AG04450 (cell line): ENCODE measurements at regions of chr18 and their contacts with region 1.

Region 1: DNA sequence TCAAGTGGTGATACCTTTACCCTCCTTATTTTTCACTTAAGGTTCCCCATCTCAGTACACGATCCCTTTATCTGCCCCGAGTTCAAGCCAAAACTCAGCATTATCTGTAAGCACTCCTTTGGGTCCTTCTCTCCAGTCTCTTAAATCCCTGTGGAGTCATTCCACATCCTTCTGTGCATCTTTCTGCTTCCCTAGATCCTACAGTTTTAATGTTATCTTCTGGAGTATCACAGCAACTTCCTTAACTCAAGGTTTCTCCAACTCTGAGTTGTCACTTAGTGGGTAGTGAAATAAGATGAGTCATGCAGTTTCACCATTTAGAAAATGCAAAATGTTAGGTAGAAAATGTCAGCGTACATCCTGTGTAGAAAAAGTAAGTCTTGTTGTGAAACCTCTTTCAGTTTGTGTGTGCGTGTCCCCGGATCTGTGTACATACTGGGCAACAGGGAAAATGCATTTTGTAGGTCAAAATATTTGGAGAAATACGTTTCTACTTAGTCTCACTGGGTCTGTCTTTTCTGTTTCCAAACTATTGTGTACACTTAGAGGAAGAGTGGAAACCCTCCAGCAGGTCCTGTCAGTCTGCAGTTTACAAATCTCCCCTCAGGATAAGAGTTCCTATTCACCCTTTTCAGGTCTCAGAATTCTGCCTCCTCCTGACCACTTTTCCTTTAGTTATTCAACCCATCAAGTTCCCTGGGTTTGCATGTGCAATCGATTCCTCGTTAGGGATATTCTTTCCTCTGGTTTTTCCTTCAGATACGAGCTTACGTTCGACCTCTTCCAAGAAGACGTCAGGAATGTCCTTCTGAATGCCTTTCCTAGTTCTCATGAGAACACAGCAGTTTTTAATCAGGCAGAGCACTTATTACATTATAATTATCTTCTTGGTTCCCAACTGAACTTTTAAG is 154.8 kb downstream of the TGIF1 start:
- DNase-seq: peak; percentile 90
- H3K4me3 ChIP-seq: peak overlapping the region; percentile 57
- H3K27ac ChIP-seq: peak overlapping the region; percentile 100
- H3K27me3 ChIP-seq: no peaks in the 10 kb centered on the region
- CTCF ChIP-seq: no peak

Region 2: GRCh38 chr18:3044894-3045698 is 559.7 kb before region 1 on chr18:
- CTCF ChIA-PET with region 1: no interaction called
- POLR2A ChIA-PET with region 1: no interaction called
- DNase-seq: no peak
- H3K4me3 ChIP-seq: no peak overlapping the region
- H3K27ac ChIP-seq: no peak overlapping the region
- H3K27me3 ChIP-seq: no peaks in the 10 kb centered on the region
- CTCF ChIP-seq: no peak

Region 3: GRCh38 chr18:3333056-3333720 is 271.6 kb before region 1 on chr18:
- CTCF ChIA-PET with region 1: no interaction called
- POLR2A ChIA-PET with region 1: interaction called, 12 read pairs
- DNase-seq: no peak
- H3K4me3 ChIP-seq: no peak overlapping the region
- H3K27ac ChIP-seq: no peak overlapping the region
- H3K27me3 ChIP-seq: no peaks in the 10 kb centered on the region
- CTCF ChIP-seq: no peak

Region 4: GRCh38 chr18:3447895-3448837 is 156.6 kb before region 1 on chr18:
- CTCF ChIA-PET with region 1: interaction called, 11 read pairs
- POLR2A ChIA-PET with region 1: interaction called, 29 read pairs
- DNase-seq: peak; percentile 88
- H3K4me3 ChIP-seq: peak overlapping the region; percentile 89
- H3K27ac ChIP-seq: peak overlapping the region; percentile 99
- H3K27me3 ChIP-seq: no peaks in the 10 kb centered on the region
- CTCF ChIP-seq: peak; percentile 18; the same call in 1 of the 2 replicates

Region 5: DNA sequence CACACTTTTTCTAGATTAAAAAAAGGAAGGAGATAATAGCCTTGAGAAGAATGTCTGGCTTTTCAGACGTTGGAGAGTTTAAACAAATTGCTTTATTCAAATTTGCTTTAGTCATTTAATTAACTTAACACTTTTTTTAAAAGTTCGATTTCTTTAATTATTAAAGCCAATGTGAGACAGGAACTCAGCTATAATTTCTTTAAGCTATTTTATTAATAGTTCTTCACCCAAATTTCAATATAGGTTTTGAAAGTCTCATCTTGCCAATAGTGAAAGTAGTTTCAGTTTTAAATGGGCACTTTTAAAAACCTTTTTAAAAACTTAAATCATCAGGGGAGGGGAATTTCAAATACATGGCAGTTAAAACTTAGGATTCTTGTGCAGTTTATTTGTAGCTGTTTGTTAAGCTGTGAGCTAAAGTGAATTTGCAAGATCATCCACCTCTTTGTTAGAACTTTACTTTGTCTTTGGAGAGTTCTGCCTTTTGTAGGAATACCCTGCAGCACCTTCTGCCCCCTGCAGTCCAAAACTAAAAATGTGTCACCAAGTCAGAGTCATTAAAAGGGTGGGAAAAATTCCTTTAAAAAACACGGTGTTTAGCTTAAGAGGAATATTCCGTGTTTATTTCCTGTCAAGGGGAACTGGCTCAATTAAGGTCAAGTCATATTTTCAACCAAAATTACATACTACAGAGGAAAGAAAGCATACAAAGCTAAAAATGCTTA is 150.2 kb before region 1 on chr18:
- CTCF ChIA-PET with region 1: interaction called, 11 read pairs
- POLR2A ChIA-PET with region 1: interaction called, 29 read pairs
- DNase-seq: no peak
- H3K4me3 ChIP-seq: peak overlapping the region; percentile 53
- H3K27ac ChIP-seq: peak overlapping the region; percentile 68
- H3K27me3 ChIP-seq: no peaks in the 10 kb centered on the region
- CTCF ChIP-seq: peak; percentile 74

Region 6: GRCh38 chr18:3593904-3594661 is 10.7 kb before region 1 on chr18:
- CTCF ChIA-PET with region 1: interaction called, 25 read pairs
- POLR2A ChIA-PET with region 1: interaction called, 15 read pairs
- DNase-seq: peak; percentile 96
- H3K4me3 ChIP-seq: peak overlapping the region; percentile 76
- H3K27ac ChIP-seq: peak overlapping the region; percentile 100
- H3K27me3 ChIP-seq: no peaks in the 10 kb centered on the region
- CTCF ChIP-seq: peak; percentile 89

Region 7: GRCh38 chr18:3623769-3624545 is 19.2 kb after region 1 on chr18:
- CTCF ChIA-PET with region 1: interaction called, 5 read pairs
- POLR2A ChIA-PET with region 1: interaction called, 28 read pairs
- DNase-seq: peak; percentile 91
- H3K4me3 ChIP-seq: peak overlapping the region; percentile 51
- H3K27ac ChIP-seq: peak overlapping the region; percentile 100
- H3K27me3 ChIP-seq: no peaks in the 10 kb centered on the region
- CTCF ChIP-seq: no peak

Region 8: DNA sequence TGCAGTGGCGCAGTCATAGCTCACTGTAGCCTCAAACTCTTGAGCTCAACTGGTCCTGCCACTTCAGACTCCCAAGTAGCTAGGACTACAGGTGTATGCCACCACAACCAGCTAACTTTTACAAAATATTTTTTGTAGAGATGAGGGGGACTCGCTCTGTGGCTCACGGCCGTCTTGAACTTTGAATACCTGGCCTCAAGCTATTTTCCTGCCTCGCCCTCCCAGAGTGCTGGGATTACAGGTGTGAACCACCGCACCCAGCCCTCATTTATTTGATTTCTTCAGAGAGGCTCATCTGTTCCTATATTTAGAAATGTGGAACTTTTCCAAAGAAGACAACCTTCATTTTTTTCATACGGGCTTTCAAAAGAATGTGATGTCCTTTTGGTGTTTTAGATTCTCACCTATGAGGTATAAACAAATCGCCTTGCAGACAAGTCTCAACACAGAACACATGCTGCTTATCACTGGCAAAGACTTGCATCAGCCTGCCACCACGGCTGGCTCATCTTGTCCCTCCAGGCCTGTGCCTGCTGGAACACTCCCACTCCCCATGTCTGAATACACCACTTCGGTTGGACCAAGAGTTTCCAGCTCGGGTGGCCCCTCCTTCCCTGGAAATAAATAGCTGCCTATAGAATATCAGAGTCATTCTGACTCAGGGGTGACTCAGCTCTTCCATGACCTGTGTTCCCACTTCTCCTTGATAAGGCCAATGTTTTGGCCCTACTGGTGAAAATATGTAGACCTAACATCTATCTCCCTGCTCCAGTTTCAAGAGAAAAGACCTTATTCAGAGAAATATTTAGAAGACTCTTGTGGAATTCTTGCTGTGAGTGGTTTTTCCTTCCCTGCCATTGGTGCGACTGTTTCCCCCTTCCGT is 47.9 kb after region 1 on chr18:
- CTCF ChIA-PET with region 1: interaction called, 4 read pairs
- POLR2A ChIA-PET with region 1: interaction called, 11 read pairs
- DNase-seq: peak; percentile 92
- H3K4me3 ChIP-seq: no peak overlapping the region
- H3K27ac ChIP-seq: peak overlapping the region; percentile 96
- H3K27me3 ChIP-seq: no peaks in the 10 kb centered on the region
- CTCF ChIP-seq: peak; percentile 33; the same call in 1 of the 2 replicates